Activated naive CD4-positive, alpha-beta T cell treated with anti-CD3 and anti-CD28 coated beads for 36 hours (primary cell): ENCODE measurements at regions of chr6 and their contacts with region 1.

Region 1: DNA sequence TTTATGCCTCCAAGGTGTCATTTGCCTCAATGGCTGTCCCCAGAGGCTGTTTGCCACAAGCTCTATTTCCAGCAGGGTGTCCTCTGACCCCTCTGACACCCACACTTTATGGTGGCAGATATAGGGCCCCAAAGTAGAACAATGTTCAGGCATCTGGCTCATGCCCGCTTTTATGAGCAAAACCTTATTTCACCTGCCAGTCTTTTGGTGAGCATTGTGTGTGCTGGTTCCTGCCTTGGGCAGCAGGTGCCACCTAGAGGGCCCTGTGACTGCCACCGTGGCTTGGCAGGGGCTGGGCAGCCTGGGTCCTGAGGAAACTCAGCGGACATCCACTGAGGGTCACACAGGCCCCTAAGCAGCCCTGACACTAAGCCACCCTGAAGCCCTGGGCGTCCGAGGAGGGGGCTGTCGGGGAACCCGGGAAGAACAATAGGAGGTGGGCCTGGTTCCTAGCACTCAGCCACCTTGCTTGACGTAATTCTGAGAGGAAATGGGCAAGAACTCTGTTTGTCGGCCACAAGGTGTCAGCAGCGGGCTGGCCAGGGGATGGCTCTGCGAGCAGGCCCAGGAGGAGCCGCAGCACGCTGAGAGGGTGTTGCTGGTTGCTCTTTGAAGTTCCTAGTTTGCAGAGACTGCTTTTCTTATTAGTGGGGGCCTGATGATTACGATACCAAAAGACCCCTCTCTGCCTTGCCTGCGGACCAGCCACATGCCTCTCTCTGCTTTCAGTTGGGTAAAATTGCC is 148.9 kb downstream of the SCML4 start:
- DNase-seq: peak; percentile 94
- H3K4me3 Mint-ChIP-seq: peak overlapping the region; percentile 55
- H3K27ac Mint-ChIP-seq: peak overlapping the region; percentile 72
- H3K4me1 Mint-ChIP-seq: peaks cover 6% of the 10 kb centered on the region
- H3K27me3 Mint-ChIP-seq: no peaks in the 10 kb centered on the region

Region 2: GRCh38 chr6:107033126-107033525 is 642.0 kb before region 1 on chr6:
- CTCF ChIA-PET with region 1: interaction called, 4 read pairs
- intact Hi-C with region 1: loop called (anchors 1 kb)
- DNase-seq: no peak
- H3K4me3 Mint-ChIP-seq: no peak overlapping the region
- H3K27ac Mint-ChIP-seq: no peak overlapping the region
- H3K4me1 Mint-ChIP-seq: peaks cover 42% of the 10 kb centered on the region
- H3K27me3 Mint-ChIP-seq: no peaks in the 10 kb centered on the region

Region 3: DNA sequence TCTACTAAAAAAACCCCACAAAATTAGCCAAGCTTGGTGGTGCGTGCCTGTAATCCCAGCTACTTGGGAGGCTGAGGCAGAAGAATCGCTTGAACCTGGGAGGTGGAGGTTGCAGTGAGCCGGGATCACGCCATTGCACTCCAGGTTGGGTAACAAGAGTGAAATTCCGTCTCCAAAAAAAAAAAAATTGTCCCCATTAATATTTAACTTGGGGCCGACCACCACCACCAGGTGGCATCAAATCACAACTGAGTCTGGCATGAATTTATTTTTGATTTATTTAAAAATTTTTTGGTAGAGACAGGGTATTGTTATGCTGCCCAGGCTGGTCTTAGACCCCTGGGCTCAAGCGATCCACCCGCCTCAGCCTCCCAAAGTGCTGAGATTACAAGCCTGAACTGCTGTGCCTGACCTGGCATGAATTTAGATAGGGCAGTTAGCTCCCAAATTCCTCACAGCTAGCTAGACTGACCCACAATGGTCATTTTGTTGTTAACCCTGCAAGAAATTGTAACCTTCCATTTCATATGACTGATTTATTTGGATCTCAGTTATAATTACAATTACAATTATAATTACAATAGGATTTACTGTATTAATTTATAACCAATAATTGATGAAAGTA is 542.7 kb before region 1 on chr6:
- CTCF ChIA-PET with region 1: interaction called, 6 read pairs
- intact Hi-C with region 1: loop called (anchors 1 kb)
- DNase-seq: peak; percentile 47
- H3K4me3 Mint-ChIP-seq: no peak overlapping the region
- H3K27ac Mint-ChIP-seq: no peak overlapping the region
- H3K4me1 Mint-ChIP-seq: no peaks in the 10 kb centered on the region
- H3K27me3 Mint-ChIP-seq: no peaks in the 10 kb centered on the region

Region 4: GRCh38 chr6:107318100-107318736 is 356.9 kb before region 1 on chr6:
- CTCF ChIA-PET with region 1: interaction called, 13 read pairs
- intact Hi-C with region 1: loop called (anchors 1 kb)
- DNase-seq: peak; percentile 62
- H3K4me3 Mint-ChIP-seq: no peak overlapping the region
- H3K27ac Mint-ChIP-seq: no peak overlapping the region
- H3K4me1 Mint-ChIP-seq: peaks cover 17% of the 10 kb centered on the region
- H3K27me3 Mint-ChIP-seq: no peaks in the 10 kb centered on the region

Region 5: DNA sequence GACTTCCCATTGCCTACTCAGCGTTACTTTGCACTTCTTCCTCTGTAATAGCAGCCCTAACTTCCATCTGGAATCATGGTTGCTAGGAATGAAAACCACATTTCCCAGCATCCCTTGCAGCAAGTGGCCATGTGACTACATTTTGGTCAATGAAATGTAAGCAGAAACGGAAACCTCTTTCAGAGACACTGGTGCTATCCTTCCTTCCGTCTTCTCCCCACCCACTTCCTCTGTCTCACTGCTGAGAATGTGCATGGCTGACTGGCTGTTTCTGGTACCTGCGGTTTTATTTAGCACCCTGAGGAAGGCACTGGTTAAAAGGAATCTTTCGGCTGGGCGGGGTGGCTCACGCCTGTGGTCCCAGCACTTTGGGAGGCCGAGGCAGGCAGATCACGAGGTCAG is 41.5 kb after region 1 on chr6:
- CTCF ChIA-PET with region 1: no interaction called
- intact Hi-C with region 1: loop called (anchors 1 kb)
- DNase-seq: peak; percentile 89
- H3K4me3 Mint-ChIP-seq: peak overlapping the region; percentile 71
- H3K27ac Mint-ChIP-seq: peak overlapping the region; percentile 93
- H3K4me1 Mint-ChIP-seq: peaks cover 65% of the 10 kb centered on the region
- H3K27me3 Mint-ChIP-seq: no peaks in the 10 kb centered on the region

Region 6: DNA sequence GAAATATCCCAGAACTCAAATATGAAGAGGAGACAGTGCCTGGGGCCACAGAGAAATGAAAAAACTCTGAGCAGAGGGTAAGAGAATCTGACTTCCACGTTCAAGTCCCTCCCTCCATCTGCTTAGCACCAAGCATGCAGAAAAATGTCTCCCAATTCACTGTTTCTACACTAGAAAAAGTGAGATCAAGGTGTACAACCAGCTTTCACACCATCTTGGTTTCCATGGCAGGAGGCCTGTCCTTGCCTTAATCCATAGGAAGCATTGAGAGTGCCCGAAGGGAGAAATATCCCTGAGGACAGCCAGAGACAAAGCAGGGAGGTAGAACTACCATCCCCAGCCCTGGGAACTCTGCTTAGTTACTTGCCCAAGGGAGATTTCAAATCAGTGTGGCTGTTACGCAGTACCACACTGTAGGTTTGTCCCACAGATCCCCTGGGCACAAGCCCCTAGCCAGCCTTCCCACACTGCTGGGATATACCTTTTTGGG is 66.1 kb after region 1 on chr6:
- CTCF ChIA-PET with region 1: no interaction called
- intact Hi-C with region 1: no loop called
- DNase-seq: no peak
- H3K4me3 Mint-ChIP-seq: peak overlapping the region; percentile 66
- H3K27ac Mint-ChIP-seq: peak overlapping the region; percentile 84
- H3K4me1 Mint-ChIP-seq: peaks cover 57% of the 10 kb centered on the region
- H3K27me3 Mint-ChIP-seq: no peaks in the 10 kb centered on the region

Region 7: GRCh38 chr6:107847844-107848802 is 173.0 kb after region 1 on chr6:
- CTCF ChIA-PET with region 1: interaction called, 61 read pairs
- intact Hi-C with region 1: loop called (anchors 1 kb)
- DNase-seq: peak; percentile 86
- H3K4me3 Mint-ChIP-seq: peak overlapping the region; percentile 76
- H3K27ac Mint-ChIP-seq: peak overlapping the region; percentile 67
- H3K4me1 Mint-ChIP-seq: peaks cover 21% of the 10 kb centered on the region
- H3K27me3 Mint-ChIP-seq: no peaks in the 10 kb centered on the region

Region 8: GRCh38 chr6:107977283-107977682 is 302.1 kb after region 1 on chr6:
- CTCF ChIA-PET with region 1: no interaction called
- intact Hi-C with region 1: loop called (anchors 2 kb)
- DNase-seq: no peak
- H3K4me3 Mint-ChIP-seq: no peak overlapping the region
- H3K27ac Mint-ChIP-seq: no peak overlapping the region
- H3K4me1 Mint-ChIP-seq: no peaks in the 10 kb centered on the region
- H3K27me3 Mint-ChIP-seq: no peaks in the 10 kb centered on the region